BJ (cell line): ENCODE measurements at regions of chr10 and their contacts with region 1.

Region 1: GRCh38 chr10:70777063-70777875 is 7.9 kb downstream of the TBATA start:
- DNase-seq: no peak
- H3K4me3 ChIP-seq: no peak overlapping the region
- H3K27me3 ChIP-seq: peaks cover 8% of the 10 kb centered on the region
- CTCF ChIP-seq: no peak

Region 2: GRCh38 chr10:70880077-70880534 is 102.8 kb after region 1 on chr10:
- CTCF ChIA-PET with region 1: interaction called, 10 read pairs
- POLR2A ChIA-PET with region 1: no interaction called
- DNase-seq: no peak
- H3K4me3 ChIP-seq: no peak overlapping the region
- H3K27me3 ChIP-seq: no peaks in the 10 kb centered on the region
- CTCF ChIP-seq: peak; percentile 92